ENCODE measurements at regions of chr3 and their contacts with region 1.

Region 1: DNA sequence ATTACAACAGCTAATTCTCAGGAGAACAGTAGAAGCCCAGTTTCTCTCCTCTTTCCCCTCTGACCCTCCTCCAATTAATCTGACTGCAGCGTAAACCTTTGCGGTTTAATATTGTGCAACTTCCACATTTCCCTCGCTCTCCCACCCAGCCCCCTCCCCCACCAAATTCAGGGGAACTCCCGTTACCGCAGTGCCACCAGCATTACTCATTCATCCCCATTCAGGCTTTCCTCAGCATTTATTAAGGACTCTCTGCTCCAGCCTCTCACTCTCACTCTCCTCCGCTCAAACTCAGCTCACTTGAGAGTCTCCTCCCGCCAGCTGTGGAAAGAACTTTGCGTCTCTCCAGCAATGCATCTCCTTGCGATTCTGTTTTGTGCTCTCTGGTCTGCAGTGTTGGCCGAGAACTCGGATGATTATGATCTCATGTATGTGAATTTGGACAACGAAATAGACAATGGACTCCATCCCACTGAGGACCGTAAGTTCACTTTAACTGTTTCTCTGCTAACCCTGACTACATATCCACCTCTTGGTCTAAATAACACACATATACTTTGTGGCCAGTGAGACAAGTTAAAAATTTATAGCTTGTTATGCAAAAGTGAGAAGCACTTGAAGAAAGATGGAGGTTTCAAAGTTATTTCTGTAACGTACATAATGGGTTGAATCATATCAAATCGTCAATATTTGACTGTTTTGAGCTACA is at the start of gene PTX3:
- DNase-seq: no peak
- H3K4me3 Mint-ChIP-seq: peak within 1 kb of the TSS; percentile 50
- H3K27ac Mint-ChIP-seq: no peak within 1 kb of the TSS
- H3K4me1 Mint-ChIP-seq: peaks cover 6% of the 10 kb centered on the region
- H3K27me3 Mint-ChIP-seq: peaks cover 53% of the 10 kb centered on the region
- total RNA-seq, gene PTX3: not detected in 2 replicates

Region 2: DNA sequence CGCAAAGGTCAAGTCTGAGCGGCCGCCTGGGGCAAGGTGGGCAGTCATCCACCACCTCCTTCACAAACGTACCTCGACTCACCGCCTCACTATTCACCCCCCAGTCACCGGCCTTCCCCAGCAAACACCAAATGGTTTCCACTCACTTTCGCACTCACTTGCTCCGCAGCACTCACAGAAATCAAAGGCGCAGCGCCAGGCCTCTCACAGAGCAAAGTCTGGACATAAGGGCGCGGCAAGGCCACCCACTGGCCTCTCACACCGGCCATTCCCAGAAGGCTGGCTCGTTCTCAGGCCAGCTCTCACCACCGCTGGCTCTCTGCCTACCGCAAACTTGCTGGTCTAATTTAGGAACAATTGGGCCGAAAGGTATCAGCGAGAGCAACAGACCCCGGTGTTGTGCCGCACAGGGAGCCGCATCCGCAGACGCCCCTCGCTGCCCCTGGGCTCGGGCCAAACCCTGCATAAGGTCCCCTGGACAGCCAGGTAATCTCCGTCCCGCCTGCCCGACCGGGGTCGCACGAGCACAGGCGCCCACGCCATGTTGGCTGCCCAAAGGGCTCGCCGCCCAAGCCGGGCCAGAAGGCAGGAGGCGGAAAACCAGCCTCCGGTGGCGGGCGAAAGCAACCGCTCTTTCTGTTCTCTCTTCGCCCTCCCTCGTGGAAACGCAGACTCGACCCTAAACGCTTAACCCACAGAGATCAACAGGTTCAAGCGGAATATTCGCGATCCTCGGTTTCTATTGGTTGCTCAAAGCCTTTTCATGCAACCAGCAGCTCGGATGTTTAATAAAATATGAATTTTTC is 666.5 kb after region 1 on chr3:
- intact Hi-C with region 1: loop called (anchors 5 kb)
- DNase-seq: no peak
- H3K4me3 Mint-ChIP-seq: no peak overlapping the region
- H3K27ac Mint-ChIP-seq: peak overlapping the region; percentile 71
- H3K4me1 Mint-ChIP-seq: peaks cover 31% of the 10 kb centered on the region
- H3K27me3 Mint-ChIP-seq: peaks cover 90% of the 10 kb centered on the region